CD8-positive, alpha-beta memory T cell (primary cell): ENCODE measurements at regions of chr9 and their contacts with region 1.

Region 1: DNA sequence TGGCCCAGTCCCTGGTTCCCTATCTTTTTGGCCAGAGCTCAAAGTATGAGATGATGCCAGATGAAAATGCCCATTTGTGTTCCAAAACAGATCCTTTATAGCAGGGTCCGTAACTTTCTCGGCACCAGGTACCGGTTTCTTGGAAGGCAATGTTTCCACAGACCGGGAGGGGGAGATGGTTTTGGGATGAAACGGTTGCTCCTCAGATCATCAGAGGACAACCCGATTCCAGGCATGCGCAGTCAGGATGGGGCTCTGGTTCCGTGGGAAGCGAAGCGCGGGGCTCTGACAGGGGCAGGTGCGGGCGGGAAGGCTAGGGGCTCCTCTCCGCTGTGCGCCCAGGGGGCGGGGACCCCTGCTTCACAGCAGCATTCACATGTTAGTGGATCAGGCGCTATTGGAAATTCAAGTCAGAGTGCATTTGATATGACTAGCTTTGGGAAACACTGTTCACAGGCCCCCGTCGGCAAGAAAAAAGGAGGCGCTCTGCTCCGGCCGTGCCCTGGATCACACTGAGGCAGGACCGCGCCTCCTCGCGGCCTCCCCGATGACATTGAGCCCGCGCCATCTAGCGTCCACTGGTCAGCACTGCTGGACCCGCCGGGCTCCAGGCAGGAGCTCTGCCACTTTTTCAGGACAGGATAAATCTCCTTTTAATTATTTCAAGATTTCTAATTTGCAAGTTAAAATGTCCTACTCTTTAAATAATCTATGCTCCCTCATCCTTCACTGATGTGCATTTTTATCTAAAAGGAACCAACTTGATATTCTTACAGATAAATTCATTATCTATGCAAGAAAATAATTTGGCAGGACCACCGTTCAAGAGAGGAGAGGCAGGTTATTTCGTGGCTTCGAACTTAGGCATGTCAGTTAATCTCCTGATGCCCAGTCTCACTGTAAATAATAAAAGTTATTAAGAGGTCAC is 190.0 kb downstream of the FANCC start:
- DNase-seq: peak; percentile 33 to 71 (median 48)
- H3K4me3 ChIP-seq: no peak overlapping the region
- H3K4me3 Mint-ChIP-seq: no peak overlapping the region
- H3K27ac ChIP-seq: no peak overlapping the region
- H3K27ac Mint-ChIP-seq: no peak overlapping the region
- H3K4me1 ChIP-seq: no peaks in the 10 kb centered on the region
- H3K4me1 Mint-ChIP-seq: peaks cover 3 to 9% (median 3%) of the 10 kb centered on the region in 3 donors
- H3K27me3 ChIP-seq: no peaks in the 10 kb centered on the region
- H3K27me3 Mint-ChIP-seq: no peaks in the 10 kb centered on the region

Region 2: DNA sequence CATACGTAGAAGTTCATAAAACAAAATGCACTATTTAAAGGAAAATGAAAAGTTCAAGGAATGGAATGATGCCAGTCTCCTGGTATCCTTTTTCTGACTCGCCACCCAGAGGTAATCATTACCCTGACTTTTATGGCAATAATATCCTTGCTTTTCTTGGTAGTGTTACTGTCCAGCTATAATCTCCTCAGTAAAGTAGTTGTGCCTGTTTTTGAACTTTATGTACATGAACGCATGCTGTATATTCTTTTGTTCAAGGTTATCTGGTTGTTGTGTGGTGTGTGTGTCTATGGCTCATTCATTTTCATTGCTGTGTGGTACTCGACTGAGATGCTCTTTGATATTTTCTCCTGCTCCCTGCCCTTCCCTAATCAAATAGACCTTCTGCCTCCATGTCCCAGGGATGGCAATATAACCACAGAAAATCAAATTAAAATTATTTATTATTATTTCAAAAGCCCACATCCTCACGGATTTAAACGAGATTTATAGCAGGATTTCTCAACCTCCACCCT is 459.0 kb before region 1 on chr9:
- CTCF ChIA-PET with region 1: interaction called, 18 read pairs
- POLR2A ChIA-PET with region 1: no interaction called
- DNase-seq: no peak
- H3K4me3 ChIP-seq: no peak overlapping the region
- H3K4me3 Mint-ChIP-seq: peak overlapping the region in 6 of 7 donors; percentile 87 to 98 (median 94)
- H3K27ac ChIP-seq: no peak overlapping the region
- H3K27ac Mint-ChIP-seq: peak overlapping the region in 1 of 8 donors; percentile 78
- H3K4me1 ChIP-seq: no peaks in the 10 kb centered on the region
- H3K4me1 Mint-ChIP-seq: peaks cover 5 to 15% (median 6%) of the 10 kb centered on the region in 3 donors
- H3K27me3 ChIP-seq: no peaks in the 10 kb centered on the region
- H3K27me3 Mint-ChIP-seq: peaks cover 3 to 27% of the 10 kb centered on the region in 2 donors

Region 3: GRCh38 chr9:94783102-94783664 is 344.3 kb before region 1 on chr9:
- CTCF ChIA-PET with region 1: interaction called, 11 read pairs
- POLR2A ChIA-PET with region 1: no interaction called
- DNase-seq: peak in 4 of 5 donors; percentile 3 to 55 (median 18)
- H3K4me3 ChIP-seq: no peak overlapping the region
- H3K4me3 Mint-ChIP-seq: no peak overlapping the region
- H3K27ac ChIP-seq: no peak overlapping the region
- H3K27ac Mint-ChIP-seq: no peak overlapping the region
- H3K4me1 ChIP-seq: no peaks in the 10 kb centered on the region
- H3K4me1 Mint-ChIP-seq: peaks cover 7 to 12% (median 9%) of the 10 kb centered on the region in 3 donors
- H3K27me3 ChIP-seq: no peaks in the 10 kb centered on the region
- H3K27me3 Mint-ChIP-seq: no peaks in the 10 kb centered on the region